ENCODE measurements at regions of chr19 and their contacts with region 1.

Region 1: GRCh38 chr19:43950834-43951645 is at the start of gene ZNF221:
- DNase-seq: peak; percentile 84
- ATAC-seq: peak; percentile 95
- H3K4me3 Mint-ChIP-seq: peak within 1 kb of the TSS; percentile 83
- H3K27ac Mint-ChIP-seq: peak within 1 kb of the TSS; percentile 85
- H3K4me1 Mint-ChIP-seq: peaks cover 6% of the 10 kb centered on the region
- H3K27me3 Mint-ChIP-seq: peaks cover 17% of the 10 kb centered on the region
- total RNA-seq, gene ZNF221: 1.8 to 1.9 TPM

Region 2: GRCh38 chr19:43826787-43827754 is 124.0 kb before region 1 on chr19 and contains the start of gene ZNF283:
- CTCF ChIA-PET with region 1: no interaction called
- POLR2A ChIA-PET with region 1: no interaction called
- intact Hi-C with region 1: loop called in 1 of 2 experiments (anchors 1 kb)
- DNase-seq: peak; percentile 92
- ATAC-seq: peak; percentile 99
- H3K4me3 Mint-ChIP-seq: peak within 1 kb of the TSS; percentile 87
- H3K27ac Mint-ChIP-seq: peak within 1 kb of the TSS; percentile 60
- H3K4me1 Mint-ChIP-seq: peaks cover 14% of the 10 kb centered on the region
- H3K27me3 Mint-ChIP-seq: peaks cover 5% of the 10 kb centered on the region
- total RNA-seq, gene ZNF283: 5.4 to 6.8 TPM

Region 3: GRCh38 chr19:43908659-43909058 is 42.4 kb before region 1 on chr19:
- CTCF ChIA-PET with region 1: no interaction called
- POLR2A ChIA-PET with region 1: no interaction called
- intact Hi-C with region 1: no loop called
- DNase-seq: no peak
- ATAC-seq: no peak
- H3K4me3 Mint-ChIP-seq: no peak overlapping the region
- H3K27ac Mint-ChIP-seq: no peak overlapping the region
- H3K4me1 Mint-ChIP-seq: no peaks in the 10 kb centered on the region
- H3K27me3 Mint-ChIP-seq: no peaks in the 10 kb centered on the region

Region 4: DNA sequence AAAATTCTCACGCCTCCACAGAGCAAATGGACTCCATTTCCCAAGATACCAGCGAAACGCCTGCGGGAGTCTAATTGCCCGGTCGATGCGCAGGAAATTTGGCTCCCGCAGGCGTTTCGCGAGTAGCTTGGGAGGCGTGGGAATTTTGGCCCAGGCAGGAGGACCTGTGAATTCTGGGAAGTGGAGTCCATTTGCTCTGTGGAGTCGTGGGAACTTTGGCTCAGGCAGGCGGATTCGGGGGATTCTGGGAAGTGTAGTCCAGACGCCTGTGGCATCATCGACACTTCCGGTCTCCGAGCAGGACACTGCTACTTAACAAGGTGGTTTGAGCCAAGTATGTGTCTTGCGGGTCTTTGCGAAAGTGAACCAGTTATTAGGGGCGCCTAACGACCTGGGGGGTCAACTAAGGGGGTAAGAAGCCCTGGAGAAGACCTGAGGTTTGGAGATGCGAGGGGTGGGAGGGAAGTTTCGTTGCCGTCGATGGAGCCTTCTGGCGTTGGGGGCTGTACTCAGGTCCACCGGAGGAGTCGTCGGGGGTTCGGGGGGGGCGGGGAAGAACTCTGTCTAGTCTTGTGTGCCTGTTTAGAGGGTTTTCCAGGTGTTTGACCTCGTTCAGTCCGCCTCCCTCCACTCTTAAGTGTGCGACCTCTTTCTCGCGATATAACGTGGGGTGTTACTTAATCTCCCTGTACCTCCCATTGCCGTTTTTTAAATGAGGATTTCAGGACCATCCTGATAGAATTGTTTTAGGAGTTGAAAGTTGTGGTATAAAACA is 33.1 kb after region 1 on chr19 and contains the start of gene ZNF155:
- CTCF ChIA-PET with region 1: no interaction called
- POLR2A ChIA-PET with region 1: no interaction called
- intact Hi-C with region 1: loop called in 1 of 2 experiments (anchors 1 kb)
- DNase-seq: peak; percentile 82
- ATAC-seq: peak; percentile 97
- H3K4me3 Mint-ChIP-seq: peak within 1 kb of the TSS; percentile 90
- H3K27ac Mint-ChIP-seq: peak within 1 kb of the TSS; percentile 92
- H3K4me1 Mint-ChIP-seq: peaks cover 11% of the 10 kb centered on the region
- H3K27me3 Mint-ChIP-seq: no peaks in the 10 kb centered on the region
- total RNA-seq, gene ZNF155: 4.5 to 6.0 TPM

Region 5: DNA sequence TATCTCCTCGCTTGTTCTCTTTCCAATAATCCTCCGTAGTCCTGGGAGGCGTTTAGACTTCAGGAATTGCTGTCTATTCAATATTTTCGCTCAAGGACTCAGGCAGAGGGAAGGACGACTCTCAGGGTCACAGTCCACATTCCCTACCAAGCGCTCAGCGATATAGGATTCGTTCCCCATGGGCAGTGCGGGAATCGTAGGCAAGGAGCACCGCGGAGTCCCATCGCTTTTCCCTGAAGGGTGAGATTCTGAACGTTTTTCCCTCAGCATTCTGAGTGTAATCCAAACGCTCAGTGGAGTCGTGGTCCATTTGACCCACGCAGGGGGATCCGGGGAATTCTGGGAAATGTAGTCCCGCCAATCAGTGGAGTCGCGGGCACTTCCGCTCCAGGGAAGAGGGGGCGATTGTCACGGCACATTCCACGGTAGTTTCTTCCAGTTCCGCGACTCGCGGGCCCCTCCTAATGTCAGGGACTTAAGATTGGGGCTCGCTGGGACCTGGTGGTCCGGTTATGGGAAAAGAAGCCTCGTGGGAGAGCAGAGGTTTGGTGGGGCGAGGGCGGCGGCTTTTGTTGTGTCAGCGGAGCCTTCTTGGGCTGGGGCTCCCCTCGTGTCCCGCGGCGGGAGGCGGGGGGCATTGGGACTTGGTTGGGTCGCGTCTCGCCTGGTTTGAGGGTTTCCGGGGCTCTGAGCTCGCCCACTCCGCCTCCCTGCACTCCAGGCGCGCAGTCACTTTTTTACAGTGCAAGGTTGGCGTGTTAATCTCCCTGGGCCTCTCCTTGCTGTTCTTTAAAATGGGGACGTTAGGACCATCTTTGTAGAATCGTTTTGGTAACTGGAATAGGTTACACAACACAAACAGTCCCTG is 190.4 kb after region 1 on chr19 and contains the start of gene ZNF234:
- CTCF ChIA-PET with region 1: no interaction called
- POLR2A ChIA-PET with region 1: no interaction called
- intact Hi-C with region 1: loop called in 1 of 2 experiments (anchors 1 kb)
- DNase-seq: peak; percentile 82
- ATAC-seq: peak; percentile 92
- H3K4me3 Mint-ChIP-seq: peak within 1 kb of the TSS; percentile 92
- H3K27ac Mint-ChIP-seq: peak within 1 kb of the TSS; percentile 94
- H3K4me1 Mint-ChIP-seq: peaks cover 12% of the 10 kb centered on the region
- H3K27me3 Mint-ChIP-seq: no peaks in the 10 kb centered on the region
- total RNA-seq, gene ZNF234: 7.9 to 10.4 TPM

Region 6: DNA sequence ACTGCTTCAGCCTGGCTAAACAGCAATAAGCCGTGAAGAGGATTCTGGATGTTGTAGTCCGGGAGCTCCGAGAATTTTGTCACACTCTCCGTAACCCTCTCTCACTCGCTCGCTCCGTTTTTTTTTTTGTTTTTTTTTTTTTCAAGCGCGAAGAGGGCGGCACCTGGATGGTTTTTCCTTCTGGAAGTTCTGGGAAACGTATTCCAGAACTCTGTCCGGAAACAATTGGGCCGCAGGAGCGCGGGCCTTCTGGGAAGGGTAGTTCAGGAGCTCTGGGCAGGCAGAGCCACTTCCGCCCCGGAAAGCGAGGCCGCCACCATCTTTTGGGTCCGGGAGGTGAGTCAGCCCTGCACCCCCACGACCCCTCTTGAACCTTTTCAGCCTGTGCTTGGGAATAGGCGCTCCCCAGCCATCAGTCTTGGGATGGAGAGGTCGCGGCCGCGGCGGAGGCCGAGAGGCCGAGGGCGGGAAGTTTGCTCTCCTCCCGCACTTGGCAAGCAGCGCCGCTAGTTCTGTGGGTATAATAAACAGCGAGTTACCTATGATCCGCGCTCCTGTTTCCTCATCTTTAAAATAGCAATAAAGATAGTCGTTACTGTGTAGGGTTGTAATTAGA is 261.3 kb after region 1 on chr19 and contains the start of gene ZNF227:
- CTCF ChIA-PET with region 1: no interaction called
- POLR2A ChIA-PET with region 1: no interaction called
- intact Hi-C with region 1: loop called in 1 of 2 experiments (anchors 1 kb)
- DNase-seq: peak; percentile 90
- ATAC-seq: peak; percentile 98
- H3K4me3 Mint-ChIP-seq: peak within 1 kb of the TSS; percentile 90
- H3K27ac Mint-ChIP-seq: peak within 1 kb of the TSS; percentile 92
- H3K4me1 Mint-ChIP-seq: peaks cover 22% of the 10 kb centered on the region
- H3K27me3 Mint-ChIP-seq: no peaks in the 10 kb centered on the region
- total RNA-seq, gene ZNF227: 19.4 to 20.6 TPM

Measured in activated CD4-positive, alpha-beta T cell treated with anti-CD3 and anti-CD28 coated beads for 36 hours (primary cell).